Endothelial cell of umbilical vein (primary cell): ENCODE measurements at regions of chr10 and their contacts with region 1.

Region 1: DNA sequence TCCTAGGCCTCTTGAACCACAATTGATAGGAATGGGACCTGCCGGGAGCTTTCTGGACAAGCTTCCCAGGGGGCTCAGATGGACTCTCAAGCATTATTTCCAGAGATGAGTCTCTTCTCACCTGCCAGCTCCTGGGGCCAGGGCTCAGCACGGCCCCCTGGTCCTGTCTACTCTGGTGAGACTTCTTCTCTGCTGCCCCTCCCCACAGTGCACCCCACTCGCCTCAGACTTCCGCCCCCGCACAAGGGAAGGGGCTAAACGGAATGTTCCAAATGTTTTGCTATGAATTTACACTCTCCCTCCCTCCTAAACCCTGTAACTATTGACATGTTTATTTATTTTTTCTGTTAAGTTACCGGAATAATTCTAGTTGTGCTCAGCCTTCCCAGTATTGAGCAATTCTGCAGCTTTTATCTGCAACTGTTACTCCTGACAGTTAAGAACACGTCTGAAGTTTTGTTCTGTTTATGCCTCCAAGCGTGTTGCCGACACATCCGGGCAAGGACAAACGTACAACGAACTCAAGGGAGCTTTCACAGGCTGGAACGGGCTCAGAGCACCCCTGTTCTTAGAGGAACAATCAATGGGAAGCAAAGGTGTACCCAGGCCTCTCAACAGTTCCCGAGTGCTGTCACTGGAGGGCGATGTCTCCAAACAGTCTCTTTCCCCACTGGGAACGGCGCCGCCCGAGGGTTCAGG is 55.2 kb downstream of the FHIP2A start:
- DNase-seq: peak; percentile 58
- H3K4me3 ChIP-seq: no peak overlapping the region
- H3K27ac ChIP-seq: no peak overlapping the region
- H3K4me1 ChIP-seq: no peaks in the 10 kb centered on the region
- H3K27me3 ChIP-seq: no peaks in the 10 kb centered on the region
- CTCF ChIP-seq: peak; percentile 81 to 89
- POLR2A ChIP-seq: no peak

Region 2: GRCh38 chr10:114856544-114857282 is 20.0 kb before region 1 on chr10:
- CTCF ChIA-PET with region 1: interaction called, 17 read pairs
- POLR2A ChIA-PET with region 1: no interaction called
- dilution Hi-C with region 1: no loop called
- intact Hi-C with region 1: no loop called
- DNase-seq: peak; percentile 81
- H3K4me3 ChIP-seq: peak overlapping the region in 1 of 3 experiments; percentile 38
- H3K27ac ChIP-seq: peak overlapping the region; percentile 94
- H3K4me1 ChIP-seq: peaks cover 32% of the 10 kb centered on the region
- H3K27me3 ChIP-seq: no peaks in the 10 kb centered on the region
- CTCF ChIP-seq: no peak
- POLR2A ChIP-seq: no peak

Region 3: DNA sequence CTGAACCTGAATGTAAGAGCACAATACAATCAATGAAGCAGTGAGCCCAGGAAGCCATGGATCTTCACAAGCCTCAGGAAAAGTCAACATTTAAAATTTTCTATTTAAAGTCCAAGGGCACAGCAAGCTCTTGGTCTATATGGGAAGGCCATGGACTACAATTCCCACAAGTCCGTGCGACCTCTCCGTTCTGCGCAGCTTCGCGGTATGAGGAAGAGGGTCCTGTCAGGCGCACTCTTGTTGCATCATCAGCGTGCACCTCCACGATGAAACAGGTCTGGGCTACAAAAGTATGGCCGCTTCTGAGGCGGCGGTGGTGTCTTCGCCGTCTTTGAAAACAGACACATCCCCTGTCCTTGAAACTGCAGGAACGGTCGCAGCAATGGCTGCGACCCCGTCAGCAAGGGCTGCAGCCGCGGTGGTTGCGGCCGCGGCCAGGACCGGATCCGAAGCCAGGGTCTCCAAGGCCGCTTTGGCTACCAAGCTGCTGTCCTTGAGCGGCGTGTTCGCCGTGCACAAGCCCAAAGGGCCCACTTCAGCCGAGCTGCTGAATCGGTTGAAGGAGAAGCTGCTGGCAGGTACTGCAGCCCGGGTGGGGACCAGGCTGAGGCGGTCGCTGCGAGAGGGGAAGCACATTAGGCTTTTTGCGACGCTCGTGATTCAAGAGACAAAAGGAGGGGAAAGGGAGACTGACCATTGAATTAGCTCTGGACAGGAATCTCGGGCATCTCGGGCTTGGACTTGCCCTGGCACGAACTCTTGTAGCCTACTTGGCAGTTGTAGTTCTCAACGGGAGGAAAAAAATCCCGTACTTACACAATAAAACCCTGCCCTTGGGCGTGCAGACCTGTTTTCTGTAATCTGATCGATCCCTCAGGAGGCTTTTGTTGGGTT is 61.5 kb after region 1 on chr10 and contains the start of gene TRUB1:
- CTCF ChIA-PET with region 1: interaction called, 11 read pairs
- POLR2A ChIA-PET with region 1: no interaction called
- dilution Hi-C with region 1: no loop called
- intact Hi-C with region 1: loop called (anchors 1 kb)
- DNase-seq: peak; percentile 95
- H3K4me3 ChIP-seq: peak within 1 kb of the TSS; percentile 73 to 90 (median 75)
- H3K27ac ChIP-seq: peak within 1 kb of the TSS; percentile 75
- H3K4me1 ChIP-seq: peaks cover 12% of the 10 kb centered on the region
- H3K27me3 ChIP-seq: peaks cover 0 to 3% of the 10 kb centered on the region in 2 experiments
- CTCF ChIP-seq: no peak
- POLR2A ChIP-seq: peak; percentile 71
- total RNA-seq, gene TRUB1: 15.1 and 16.7 TPM in 2 replicates

Region 4: DNA sequence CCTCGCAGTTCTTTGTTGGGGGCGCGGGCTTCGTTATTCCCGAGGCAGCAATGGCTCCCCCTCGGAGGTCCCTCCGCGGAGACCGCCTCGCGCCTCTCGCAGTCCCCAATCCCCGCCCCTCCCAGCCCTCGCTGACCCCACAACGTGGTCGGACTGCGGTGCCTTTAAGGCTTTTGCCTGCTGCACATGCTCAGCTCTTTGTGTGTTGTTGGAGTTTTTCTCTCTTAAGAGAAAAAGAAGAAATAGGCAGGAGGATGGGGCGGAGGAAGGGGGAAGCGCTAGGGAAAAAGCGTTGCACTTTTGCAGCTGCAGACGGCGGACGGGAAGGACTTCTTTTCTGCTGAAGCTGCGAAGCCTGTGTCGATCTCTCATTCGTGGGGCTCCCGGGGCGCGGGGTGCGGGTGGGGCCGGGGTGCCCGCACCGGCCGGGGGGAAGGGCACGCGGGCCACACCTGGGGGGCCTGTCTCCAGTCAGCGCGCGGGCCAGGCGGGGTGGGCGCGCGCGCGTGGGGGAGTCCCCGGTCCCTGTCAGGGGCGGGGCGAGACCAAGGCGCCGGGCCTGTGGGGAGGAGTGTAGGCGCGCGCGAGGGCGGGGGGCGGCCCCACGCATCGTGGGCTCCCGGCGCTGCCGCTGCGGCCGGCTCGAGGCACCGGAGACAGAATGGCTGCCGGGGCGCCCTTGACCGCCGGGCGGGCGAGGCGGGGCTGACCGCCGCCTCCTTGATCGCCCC is 216.0 kb after region 1 on chr10:
- CTCF ChIA-PET with region 1: interaction called, 5 read pairs
- POLR2A ChIA-PET with region 1: no interaction called
- dilution Hi-C with region 1: no loop called
- intact Hi-C with region 1: loop called (anchors 2 kb)
- DNase-seq: peak; percentile 22
- H3K4me3 ChIP-seq: peak overlapping the region; percentile 48 to 53 (median 51)
- H3K27ac ChIP-seq: no peak overlapping the region
- H3K4me1 ChIP-seq: peaks cover 4% of the 10 kb centered on the region
- H3K27me3 ChIP-seq: peaks cover 30 to 58% of the 10 kb centered on the region in 2 experiments
- CTCF ChIP-seq: no peak
- POLR2A ChIP-seq: no peak